Adrenal gland (tissue), 19 donors: ENCODE measurements at regions of chr1 and their contacts with region 1.

Region 1: GRCh38 chr1:224851210-224851847 is 78.1 kb upstream of the DNAH14 start:
- DNase-seq: peak; percentile 51 to 83 (median 74)
- H3K4me3 ChIP-seq: no peak overlapping the region
- H3K27ac ChIP-seq: no peak overlapping the region
- H3K4me1 ChIP-seq: no peaks in the 10 kb centered on the region
- H3K27me3 ChIP-seq: no peaks in the 10 kb centered on the region
- CTCF ChIP-seq: peak; percentile 47 to 59 (median 54)
- POLR2A ChIP-seq: no peak

Region 2: GRCh38 chr1:224513787-224514209 is 337.5 kb before region 1 on chr1:
- intact Hi-C with region 1: loop called (anchors 5 kb)
- DNase-seq: peak; percentile 78 to 92 (median 83)
- H3K4me3 ChIP-seq: no peak overlapping the region
- H3K27ac ChIP-seq: no peak overlapping the region
- H3K4me1 ChIP-seq: no peaks in the 10 kb centered on the region
- H3K27me3 ChIP-seq: no peaks in the 10 kb centered on the region
- CTCF ChIP-seq: peak; percentile 82 to 95 (median 88)
- POLR2A ChIP-seq: no peak

Region 3: GRCh38 chr1:224519874-224520273 is 331.5 kb before region 1 on chr1:
- intact Hi-C with region 1: loop called in 1 of 2 experiments (anchors 5 kb)
- DNase-seq: no peak
- H3K4me3 ChIP-seq: no peak overlapping the region
- H3K27ac ChIP-seq: no peak overlapping the region
- H3K4me1 ChIP-seq: no peaks in the 10 kb centered on the region
- H3K27me3 ChIP-seq: no peaks in the 10 kb centered on the region
- CTCF ChIP-seq: no peak
- POLR2A ChIP-seq: no peak

Region 4: GRCh38 chr1:224644553-224645154 is 206.7 kb before region 1 on chr1:
- intact Hi-C with region 1: loop called (anchors 5 kb)
- DNase-seq: peak; percentile 39 to 71 (median 52)
- H3K4me3 ChIP-seq: no peak overlapping the region
- H3K27ac ChIP-seq: no peak overlapping the region
- H3K4me1 ChIP-seq: no peaks in the 10 kb centered on the region
- H3K27me3 ChIP-seq: no peaks in the 10 kb centered on the region
- CTCF ChIP-seq: peak; percentile 74 to 89 (median 82)
- POLR2A ChIP-seq: no peak

Region 5: DNA sequence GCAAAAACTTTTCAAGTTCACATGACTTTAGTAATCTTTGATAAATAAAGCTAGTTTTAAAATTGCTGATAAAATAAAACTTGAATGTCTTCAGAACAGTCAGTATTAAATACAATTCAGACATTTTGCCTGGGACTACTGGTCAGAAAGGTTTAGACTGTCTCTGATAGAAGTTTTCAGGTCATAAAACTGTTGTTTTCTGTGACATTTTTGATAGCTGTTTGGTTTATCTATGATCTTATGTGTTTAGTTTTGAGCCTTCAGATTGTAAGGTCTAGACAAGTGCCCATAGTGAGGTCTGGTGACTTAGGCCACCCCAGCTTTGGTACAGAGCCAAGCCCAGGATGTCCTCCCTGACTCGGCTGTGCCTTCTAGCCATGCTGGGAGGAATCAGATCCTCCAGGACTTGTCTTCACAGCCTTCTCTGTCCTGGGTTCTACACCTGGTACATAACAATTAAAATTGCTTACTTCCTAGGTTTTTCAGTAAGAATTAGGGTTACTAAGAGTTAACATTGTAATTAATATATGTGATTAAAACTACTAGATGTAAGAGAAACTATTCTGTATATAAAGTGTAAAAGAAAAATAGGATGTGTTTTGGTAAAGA is 63.1 kb after region 1 on chr1:
- intact Hi-C with region 1: no loop called
- DNase-seq: no peak
- H3K4me3 ChIP-seq: no peak overlapping the region
- H3K27ac ChIP-seq: no peak overlapping the region
- H3K4me1 ChIP-seq: no peaks in the 10 kb centered on the region
- H3K27me3 ChIP-seq: no peaks in the 10 kb centered on the region
- CTCF ChIP-seq: no peak
- POLR2A ChIP-seq: no peak

Region 6: GRCh38 chr1:225097175-225097574 is 245.8 kb after region 1 on chr1:
- intact Hi-C with region 1: no loop called
- DNase-seq: no peak
- H3K4me3 ChIP-seq: no peak overlapping the region
- H3K27ac ChIP-seq: no peak overlapping the region
- H3K4me1 ChIP-seq: no peaks in the 10 kb centered on the region
- H3K27me3 ChIP-seq: no peaks in the 10 kb centered on the region
- CTCF ChIP-seq: no peak
- POLR2A ChIP-seq: no peak